ENCODE measurements at regions of chr14 and their contacts with region 1.

Region 1: GRCh38 chr14:55094321-55095157 is 34.5 kb upstream of the LGALS3 start:
- DNase-seq: peak; percentile 93
- ATAC-seq: peak; percentile 79
- H3K4me3 ChIP-seq: no peak overlapping the region
- H3K27ac ChIP-seq: peak overlapping the region; percentile 39
- H3K4me1 ChIP-seq: peaks cover 26% of the 10 kb centered on the region
- H3K27me3 ChIP-seq: no peaks in the 10 kb centered on the region
- CTCF ChIP-seq: no peak

Region 2: GRCh38 chr14:54976316-54976715 is 118.2 kb before region 1 on chr14:
- CTCF ChIA-PET with region 1: interaction called, 12 read pairs
- POLR2A ChIA-PET with region 1: no interaction called
- intact Hi-C with region 1: no loop called
- DNase-seq: peak; percentile 54
- ATAC-seq: peak; percentile 95
- H3K4me3 ChIP-seq: no peak overlapping the region
- H3K27ac ChIP-seq: no peak overlapping the region
- H3K4me1 ChIP-seq: peaks cover 4% of the 10 kb centered on the region; the same call in 1 of the 2 replicates
- H3K27me3 ChIP-seq: no peaks in the 10 kb centered on the region
- CTCF ChIP-seq: no peak

Region 3: DNA sequence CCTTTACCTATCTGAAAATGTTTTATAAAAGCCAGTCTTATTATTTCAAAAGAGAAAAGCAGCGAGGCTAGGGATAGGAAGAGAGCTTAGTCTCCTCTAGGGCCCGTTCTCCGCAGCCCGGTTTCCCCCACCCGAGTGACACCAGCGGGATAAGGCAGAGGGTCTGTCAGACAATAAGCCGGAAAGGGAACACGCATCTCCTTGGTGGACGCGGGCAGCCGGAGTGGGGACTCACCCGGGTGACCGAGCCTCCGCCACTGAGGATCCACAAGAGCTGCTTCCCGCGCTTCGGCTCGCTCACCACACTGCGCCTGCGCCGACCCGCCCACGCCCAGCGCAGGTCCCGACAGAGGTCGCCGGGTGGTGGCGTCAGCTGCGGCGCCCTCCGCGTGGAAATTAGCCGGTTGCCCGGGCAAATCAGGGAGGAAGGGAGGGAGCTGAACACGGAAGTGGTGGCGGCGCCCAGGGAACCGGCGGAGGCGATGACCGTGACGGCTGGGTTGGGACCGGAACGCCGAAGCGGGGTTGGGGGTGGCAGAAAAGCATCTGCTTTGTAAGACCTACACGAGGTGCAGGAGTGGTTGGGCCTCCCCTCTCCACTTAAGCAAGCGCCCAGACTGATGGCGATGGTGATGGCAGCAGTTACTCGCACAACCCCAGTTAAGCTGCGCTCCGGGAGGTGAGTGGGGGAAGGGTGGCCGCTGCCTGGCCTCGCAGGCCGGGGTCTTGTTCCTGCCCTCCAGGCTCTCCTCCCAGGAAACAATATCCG is 67.6 kb before region 1 on chr14 and contains the starts of genes SOCS4 and WDHD1:
- CTCF ChIA-PET with region 1: interaction called, 18 read pairs
- POLR2A ChIA-PET with region 1: no interaction called
- intact Hi-C with region 1: no loop called
- DNase-seq: peak; percentile 99
- ATAC-seq: peak; percentile 92
- H3K4me3 ChIP-seq: peak within 1 kb of the TSS; percentile 75
- H3K27ac ChIP-seq: peak within 1 kb of the TSS; percentile 55
- H3K4me1 ChIP-seq: peaks cover 34% of the 10 kb centered on the region
- H3K27me3 ChIP-seq: no peaks in the 10 kb centered on the region
- CTCF ChIP-seq: peak; percentile 34
- total RNA-seq, gene SOCS4: 21.9 and 22.5 TPM in 2 replicates
- total RNA-seq, gene WDHD1: 45.9 and 47.1 TPM in 2 replicates

Region 4: DNA sequence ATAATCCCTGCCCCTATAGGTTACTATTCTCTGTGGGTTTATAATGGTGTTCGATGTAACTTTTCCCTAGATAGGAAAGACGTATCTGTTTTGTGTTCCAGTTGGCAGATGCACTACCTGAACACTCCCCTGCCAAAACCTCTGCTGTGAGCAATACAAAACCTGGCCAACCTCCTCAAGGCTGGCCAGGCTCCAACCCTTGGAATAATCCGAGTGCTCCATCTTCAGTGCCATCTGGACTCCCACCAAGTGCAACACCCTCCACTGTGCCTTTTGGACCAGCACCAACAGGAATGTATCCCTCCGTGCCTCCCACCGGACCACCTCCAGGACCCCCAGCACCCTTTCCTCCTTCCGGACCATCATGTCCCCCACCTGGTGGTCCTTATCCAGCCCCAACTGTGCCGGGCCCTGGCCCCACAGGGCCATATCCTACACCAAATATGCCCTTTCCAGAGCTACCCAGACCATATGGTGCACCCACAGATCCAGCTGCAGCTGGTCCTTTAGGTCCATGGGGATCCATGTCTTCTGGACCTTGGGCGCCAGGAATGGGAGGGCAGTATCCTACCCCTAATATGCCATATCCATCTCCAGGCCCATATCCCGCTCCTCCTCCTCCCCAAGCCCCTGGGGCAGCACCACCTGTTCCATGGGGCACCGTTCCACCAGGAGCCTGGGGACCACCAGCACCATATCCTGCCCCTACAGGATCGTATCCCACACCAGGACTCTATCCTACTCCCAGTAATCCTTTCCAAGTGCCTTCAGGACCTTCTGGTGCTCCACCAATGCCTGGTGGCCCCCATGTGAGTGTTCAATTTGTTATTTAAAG is 31.8 kb before region 1 on chr14:
- CTCF ChIA-PET with region 1: no interaction called
- POLR2A ChIA-PET with region 1: no interaction called
- intact Hi-C with region 1: no loop called
- DNase-seq: no peak
- ATAC-seq: no peak
- H3K4me3 ChIP-seq: no peak overlapping the region
- H3K27ac ChIP-seq: no peak overlapping the region
- H3K4me1 ChIP-seq: no peaks in the 10 kb centered on the region
- H3K27me3 ChIP-seq: no peaks in the 10 kb centered on the region
- CTCF ChIP-seq: no peak

Region 5: DNA sequence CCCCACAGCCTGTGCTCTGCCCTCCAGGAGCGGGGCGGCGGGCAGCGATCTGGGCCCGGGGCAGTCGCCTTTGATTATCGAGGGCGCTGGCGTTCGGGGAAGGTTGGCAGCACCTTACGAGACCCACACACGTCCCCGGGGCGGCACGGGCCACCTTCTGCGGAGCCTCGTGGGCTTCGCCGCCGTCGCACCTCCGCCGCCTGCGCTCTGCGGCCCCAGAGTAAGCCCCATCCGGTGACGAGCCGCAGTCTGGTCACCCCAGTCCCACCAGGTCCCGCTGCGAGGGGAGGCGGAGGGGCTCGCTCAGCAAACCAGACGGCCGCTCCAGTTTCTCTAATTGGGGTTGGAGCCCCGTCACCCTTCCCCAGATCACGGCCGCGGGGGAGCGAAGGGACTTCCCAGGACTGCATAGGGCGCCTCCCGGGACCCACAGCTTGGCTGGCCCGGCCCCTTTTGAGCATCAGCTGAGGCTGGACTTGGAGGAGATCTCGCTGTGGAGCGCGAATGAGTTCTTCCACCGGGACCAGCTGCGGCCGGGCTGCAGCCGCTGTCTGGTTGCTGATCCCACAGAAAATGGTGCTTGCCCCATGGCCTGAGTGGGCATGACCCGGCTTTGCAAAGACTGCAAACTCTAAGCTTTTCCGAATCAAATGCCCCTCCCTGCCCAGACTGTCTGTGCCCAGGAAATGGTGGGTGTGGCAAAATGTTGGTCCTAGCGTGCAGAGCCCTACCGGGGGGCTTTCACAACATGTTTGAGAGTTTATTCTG is 35.1 kb after region 1 on chr14:
- CTCF ChIA-PET with region 1: interaction called, 8 read pairs
- POLR2A ChIA-PET with region 1: interaction called, 5 read pairs
- intact Hi-C with region 1: loop called (anchors 1 kb)
- DNase-seq: peak; percentile 84
- ATAC-seq: peak; percentile 59
- H3K4me3 ChIP-seq: peak overlapping the region; percentile 73
- H3K27ac ChIP-seq: peak overlapping the region; percentile 70
- H3K4me1 ChIP-seq: peaks cover 58% of the 10 kb centered on the region
- H3K27me3 ChIP-seq: no peaks in the 10 kb centered on the region
- CTCF ChIP-seq: no peak

Region 6: DNA sequence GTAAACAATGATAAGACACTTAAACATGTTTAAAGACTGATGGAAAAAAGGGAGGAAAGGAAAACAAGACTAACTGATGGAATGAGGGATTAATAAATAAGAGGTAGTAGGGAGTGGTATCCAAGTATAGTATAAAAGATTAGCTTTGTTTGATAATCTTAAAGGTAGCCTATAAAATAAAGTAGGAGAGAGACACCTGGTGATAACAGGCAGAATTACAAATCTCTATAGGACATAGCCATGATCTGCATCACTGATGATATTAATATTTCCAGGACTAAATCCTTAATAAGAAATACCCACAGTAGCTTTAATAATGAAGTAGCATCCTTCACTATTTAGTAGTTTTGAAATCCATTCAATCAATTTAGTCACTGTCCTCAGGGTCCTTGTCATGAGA is 66.5 kb after region 1 on chr14:
- CTCF ChIA-PET with region 1: interaction called, 27 read pairs
- POLR2A ChIA-PET with region 1: interaction called, 6 read pairs
- intact Hi-C with region 1: loop called (anchors 1 kb)
- DNase-seq: peak; percentile 79
- ATAC-seq: peak; percentile 94
- H3K4me3 ChIP-seq: no peak overlapping the region
- H3K27ac ChIP-seq: no peak overlapping the region
- H3K4me1 ChIP-seq: no peaks in the 10 kb centered on the region
- H3K27me3 ChIP-seq: no peaks in the 10 kb centered on the region
- CTCF ChIP-seq: peak; percentile 92

Region 7: DNA sequence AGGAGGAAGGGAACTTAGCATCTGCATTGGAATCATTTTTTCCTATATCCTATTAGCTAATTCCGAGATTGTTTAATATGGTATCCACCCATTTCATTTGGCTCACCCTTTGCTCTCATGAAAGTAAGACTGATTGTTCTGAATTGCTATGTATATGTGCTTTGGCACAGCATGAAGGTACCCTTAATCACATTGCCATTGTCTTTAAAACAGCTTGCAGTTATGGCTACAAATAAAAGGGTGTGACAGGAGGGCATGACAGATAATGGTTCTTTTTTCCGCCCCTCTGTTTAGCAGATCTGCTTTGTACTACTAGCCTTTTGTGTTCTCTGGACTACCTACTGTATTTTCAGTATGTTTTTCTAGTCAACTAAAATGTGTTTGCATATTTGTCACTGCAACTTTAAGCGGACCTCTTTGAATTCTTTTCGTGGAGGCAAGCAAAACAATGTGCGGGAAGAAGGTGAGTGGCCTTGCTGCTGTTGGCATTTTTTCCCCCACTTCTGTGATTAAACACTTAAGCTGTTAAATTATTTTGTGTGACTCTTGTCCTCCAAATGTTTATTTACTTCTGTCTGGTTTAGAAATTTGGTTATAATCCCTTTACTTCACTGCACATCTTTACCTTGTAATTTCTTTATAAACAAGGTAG is 212.5 kb after region 1 on chr14:
- CTCF ChIA-PET with region 1: interaction called, 11 read pairs
- POLR2A ChIA-PET with region 1: no interaction called
- intact Hi-C with region 1: no loop called
- DNase-seq: no peak
- ATAC-seq: peak; percentile 57
- H3K4me3 ChIP-seq: no peak overlapping the region
- H3K27ac ChIP-seq: no peak overlapping the region
- H3K4me1 ChIP-seq: no peaks in the 10 kb centered on the region
- H3K27me3 ChIP-seq: no peaks in the 10 kb centered on the region
- CTCF ChIP-seq: no peak

Region 8: GRCh38 chr14:55438066-55438683 is 343.6 kb after region 1 on chr14:
- CTCF ChIA-PET with region 1: no interaction called
- POLR2A ChIA-PET with region 1: interaction called, 13 read pairs
- intact Hi-C with region 1: loop called (anchors 5 kb)
- DNase-seq: peak; percentile 92
- ATAC-seq: peak; percentile 73
- H3K4me3 ChIP-seq: no peak overlapping the region
- H3K27ac ChIP-seq: no peak overlapping the region
- H3K4me1 ChIP-seq: peaks cover 21% of the 10 kb centered on the region
- H3K27me3 ChIP-seq: no peaks in the 10 kb centered on the region
- CTCF ChIP-seq: peak; percentile 99

Measured in PC-3 (cell line).